Caco-2 (cell line): ENCODE measurements at regions of chr7 and their contacts with region 1.

Region 1: DNA sequence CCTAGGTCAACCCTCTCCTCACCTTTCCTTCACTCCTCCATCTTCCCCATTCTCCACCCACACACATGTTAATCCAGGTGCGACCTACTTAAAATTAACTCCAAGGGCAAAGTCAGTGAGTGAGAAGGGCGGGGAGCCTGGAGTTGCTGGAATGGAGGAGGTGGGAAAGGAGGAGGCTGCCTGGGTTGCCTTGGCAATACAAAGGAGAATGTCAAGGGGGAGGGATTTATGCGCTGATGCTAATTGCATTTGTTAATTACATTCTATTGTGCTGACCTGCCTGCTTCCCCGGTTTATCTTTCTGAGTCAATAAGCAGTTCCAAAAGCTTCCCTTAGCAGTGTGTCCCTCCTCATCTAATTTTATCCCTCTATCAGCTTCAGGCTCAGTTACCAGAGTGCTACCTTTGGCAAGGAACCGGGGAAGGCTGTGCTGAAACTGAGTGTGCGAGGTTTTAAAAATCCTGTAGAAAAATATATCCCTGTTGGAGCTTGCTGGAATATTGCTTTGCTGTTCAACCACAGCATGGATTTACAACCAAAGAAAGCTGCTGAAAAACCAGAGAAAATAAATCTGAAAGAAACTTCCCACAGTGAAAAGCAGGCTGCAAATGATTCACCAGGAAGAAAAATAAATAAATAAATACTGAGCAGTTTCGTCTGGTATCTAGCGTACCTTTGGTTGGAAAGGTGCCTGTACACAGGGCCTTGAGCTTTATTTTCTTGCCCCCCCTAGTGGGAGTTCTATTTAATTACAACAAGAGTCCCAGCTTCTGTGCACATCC is 113.2 kb upstream of the DGKB start:
- DNase-seq: peak; percentile 55 to 83
- H3K4me3 ChIP-seq: peak overlapping the region; percentile 16; the same call in 1 of the 2 replicates
- H3K4me3 Mint-ChIP-seq: peak overlapping the region; percentile 53
- H3K27ac Mint-ChIP-seq: no peak overlapping the region
- H3K4me1 ChIP-seq: no peaks in the 10 kb centered on the region
- H3K4me1 Mint-ChIP-seq: no peaks in the 10 kb centered on the region
- H3K27me3 ChIP-seq: no peaks in the 10 kb centered on the region
- H3K27me3 Mint-ChIP-seq: no peaks in the 10 kb centered on the region
- CTCF ChIP-seq: peak; percentile 65 to 73

Region 2: GRCh38 chr7:14717816-14718215 is 297.9 kb before region 1 on chr7:
- CTCF ChIA-PET with region 1: interaction called, 33 read pairs
- POLR2A ChIA-PET with region 1: no interaction called
- intact Hi-C with region 1: loop called (anchors 1 kb)
- DNase-seq: no peak
- H3K4me3 ChIP-seq: no peak overlapping the region
- H3K4me3 Mint-ChIP-seq: no peak overlapping the region
- H3K27ac Mint-ChIP-seq: no peak overlapping the region
- H3K4me1 ChIP-seq: no peaks in the 10 kb centered on the region
- H3K4me1 Mint-ChIP-seq: peaks cover 11% of the 10 kb centered on the region
- H3K27me3 ChIP-seq: no peaks in the 10 kb centered on the region
- H3K27me3 Mint-ChIP-seq: no peaks in the 10 kb centered on the region
- CTCF ChIP-seq: peak; percentile 19 to 49

Region 3: GRCh38 chr7:14799196-14799595 is 216.5 kb before region 1 on chr7:
- CTCF ChIA-PET with region 1: interaction called, 3 read pairs
- POLR2A ChIA-PET with region 1: no interaction called
- intact Hi-C with region 1: loop called (anchors 5 kb)
- DNase-seq: no peak
- H3K4me3 ChIP-seq: no peak overlapping the region
- H3K4me3 Mint-ChIP-seq: no peak overlapping the region
- H3K27ac Mint-ChIP-seq: no peak overlapping the region
- H3K4me1 ChIP-seq: no peaks in the 10 kb centered on the region
- H3K4me1 Mint-ChIP-seq: no peaks in the 10 kb centered on the region
- H3K27me3 ChIP-seq: no peaks in the 10 kb centered on the region
- H3K27me3 Mint-ChIP-seq: no peaks in the 10 kb centered on the region
- CTCF ChIP-seq: no peak

Region 4: DNA sequence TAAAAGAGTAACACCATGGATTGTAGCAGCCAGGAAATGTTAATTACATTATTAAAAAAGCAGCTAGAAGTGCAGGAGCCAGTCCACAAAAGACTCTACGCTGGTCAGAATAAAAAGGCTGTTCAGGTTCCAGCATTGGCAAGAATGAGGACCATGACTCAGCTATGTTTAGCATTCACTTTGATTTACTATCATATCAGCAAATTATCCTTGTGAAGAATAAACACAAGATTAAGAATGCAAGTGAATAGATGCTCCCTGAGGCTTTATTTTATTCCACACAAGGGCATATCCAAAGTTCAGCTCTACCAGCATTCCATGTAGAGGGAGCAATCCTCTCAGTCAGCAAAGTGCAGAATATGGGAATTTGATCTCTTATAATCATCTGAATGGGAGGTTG is 126.8 kb before region 1 on chr7:
- CTCF ChIA-PET with region 1: interaction called, 5 read pairs
- POLR2A ChIA-PET with region 1: no interaction called
- intact Hi-C with region 1: loop called (anchors 1 kb)
- DNase-seq: no peak
- H3K4me3 ChIP-seq: no peak overlapping the region
- H3K4me3 Mint-ChIP-seq: no peak overlapping the region
- H3K27ac Mint-ChIP-seq: no peak overlapping the region
- H3K4me1 ChIP-seq: no peaks in the 10 kb centered on the region
- H3K4me1 Mint-ChIP-seq: no peaks in the 10 kb centered on the region
- H3K27me3 ChIP-seq: no peaks in the 10 kb centered on the region
- H3K27me3 Mint-ChIP-seq: no peaks in the 10 kb centered on the region
- CTCF ChIP-seq: no peak

Region 5: DNA sequence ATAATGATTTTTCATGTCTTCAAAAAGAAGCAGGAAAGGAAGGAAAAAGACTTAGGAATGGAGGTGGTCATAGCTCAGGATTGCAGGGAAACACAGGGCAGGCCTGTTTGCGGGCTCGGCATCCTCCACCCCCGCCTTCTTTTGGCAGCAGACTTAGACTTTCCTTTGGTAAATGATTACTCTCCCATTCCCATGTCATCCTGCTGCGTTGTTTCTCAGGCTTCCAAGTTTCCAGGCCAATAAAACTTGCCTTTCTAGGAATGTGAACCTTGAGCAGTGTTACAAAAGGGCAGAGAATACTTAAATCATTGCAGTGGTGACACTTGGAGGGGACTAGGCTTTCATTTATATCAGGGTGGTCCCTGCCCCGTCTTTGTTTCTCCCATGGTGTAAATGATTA is 79.2 kb before region 1 on chr7:
- CTCF ChIA-PET with region 1: no interaction called
- POLR2A ChIA-PET with region 1: no interaction called
- intact Hi-C with region 1: loop called (anchors 2 kb)
- DNase-seq: peak; percentile 39 to 67
- H3K4me3 ChIP-seq: no peak overlapping the region
- H3K4me3 Mint-ChIP-seq: no peak overlapping the region
- H3K27ac Mint-ChIP-seq: no peak overlapping the region
- H3K4me1 ChIP-seq: peaks cover 11% of the 10 kb centered on the region
- H3K4me1 Mint-ChIP-seq: peaks cover 6% of the 10 kb centered on the region
- H3K27me3 ChIP-seq: no peaks in the 10 kb centered on the region
- H3K27me3 Mint-ChIP-seq: peaks cover 3% of the 10 kb centered on the region
- CTCF ChIP-seq: no peak

Region 6: GRCh38 chr7:15000157-15000556 is 15.6 kb before region 1 on chr7:
- CTCF ChIA-PET with region 1: interaction called, 9 read pairs
- POLR2A ChIA-PET with region 1: no interaction called
- intact Hi-C with region 1: loop called (anchors 1 kb)
- DNase-seq: peak in 1 of 2 experiments; percentile 39
- H3K4me3 ChIP-seq: no peak overlapping the region
- H3K4me3 Mint-ChIP-seq: no peak overlapping the region
- H3K27ac Mint-ChIP-seq: peak overlapping the region; percentile 24
- H3K4me1 ChIP-seq: peaks cover 21% of the 10 kb centered on the region
- H3K4me1 Mint-ChIP-seq: peaks cover 18% of the 10 kb centered on the region
- H3K27me3 ChIP-seq: no peaks in the 10 kb centered on the region
- H3K27me3 Mint-ChIP-seq: no peaks in the 10 kb centered on the region
- CTCF ChIP-seq: no peak